GM12878 (cell line): ENCODE measurements at regions of chr6 and their contacts with region 1.

Region 1: GRCh38 chr6:52389626-52390360 is 27.8 kb downstream of the PAQR8 start:
- DNase-seq: peak; percentile 87
- ATAC-seq: peak; percentile 78
- H3K4me3 ChIP-seq: peak overlapping the region; percentile 43; the same call in 1 of the 2 replicates
- H3K27ac ChIP-seq: peak overlapping the region; percentile 94
- H3K4me1 ChIP-seq: peaks cover 63% of the 10 kb centered on the region
- H3K27me3 ChIP-seq: no peaks in the 10 kb centered on the region
- CTCF ChIP-seq: no peak; a peak in 1 of 6 replicates
- EP300 ChIP-seq: peak; percentile 66 to 69; a peak in 2 of 4 replicates
- POLR2A ChIP-seq: no peak
- RAD21 ChIP-seq: peak; percentile 10; the same call in 1 of the 2 replicates

Region 2: GRCh38 chr6:52162940-52163908 is 226.6 kb before region 1 on chr6:
- CTCF ChIA-PET with region 1: interaction called, 3 read pairs
- POLR2A ChIA-PET with region 1: no interaction called
- RAD21 ChIA-PET with region 1: interaction called, 3 read pairs
- SMC1A ChIA-PET with region 1: interaction called, 4 read pairs
- in situ Hi-C with region 1: loop called (anchors 5 kb)
- intact Hi-C with region 1: no loop called
- DNase-seq: no peak
- ATAC-seq: peak; percentile 92
- H3K4me3 ChIP-seq: no peak overlapping the region
- H3K27ac ChIP-seq: no peak overlapping the region
- H3K4me1 ChIP-seq: peaks cover 9% of the 10 kb centered on the region; the same call in 1 of the 2 replicates
- H3K27me3 ChIP-seq: no peaks in the 10 kb centered on the region
- CTCF ChIP-seq: peak; percentile 84 to 95 (median 91)
- EP300 ChIP-seq: no peak
- POLR2A ChIP-seq: no peak
- RAD21 ChIP-seq: peak; percentile 100

Region 3: GRCh38 chr6:52304983-52305390 is 84.8 kb before region 1 on chr6:
- CTCF ChIA-PET with region 1: interaction called, 17 read pairs
- POLR2A ChIA-PET with region 1: interaction called, 11 read pairs
- RAD21 ChIA-PET with region 1: interaction called, 55 read pairs
- SMC1A ChIA-PET with region 1: interaction called, 74 read pairs
- in situ Hi-C with region 1: loop called (anchors 5 kb)
- intact Hi-C with region 1: loop called (anchors 2 kb)
- DNase-seq: no peak
- ATAC-seq: peak; percentile 74
- H3K4me3 ChIP-seq: peak overlapping the region; percentile 25; the same call in 1 of the 2 replicates
- H3K27ac ChIP-seq: peak overlapping the region; percentile 89
- H3K4me1 ChIP-seq: peaks cover 49% of the 10 kb centered on the region
- H3K27me3 ChIP-seq: no peaks in the 10 kb centered on the region
- CTCF ChIP-seq: no peak
- EP300 ChIP-seq: peak in 1 of 2 experiments; percentile 46; a peak in 2 of 4 replicates
- POLR2A ChIP-seq: no peak
- RAD21 ChIP-seq: 0 out of 2 replicates have a peak, but pooled peaks have one; percentile 1

Region 4: GRCh38 chr6:52361945-52362442 is 27.8 kb before region 1 on chr6 and contains the start of gene PAQR8:
- CTCF ChIA-PET with region 1: interaction called, 16 read pairs
- POLR2A ChIA-PET with region 1: interaction called, 74 read pairs
- RAD21 ChIA-PET with region 1: interaction called, 51 read pairs
- SMC1A ChIA-PET with region 1: interaction called, 77 read pairs
- in situ Hi-C with region 1: no loop called
- intact Hi-C with region 1: no loop called
- DNase-seq: no peak
- ATAC-seq: peak; percentile 90
- H3K4me3 ChIP-seq: peak within 1 kb of the TSS; percentile 94
- H3K27ac ChIP-seq: peak within 1 kb of the TSS; percentile 80
- H3K4me1 ChIP-seq: peaks cover 20% of the 10 kb centered on the region
- H3K27me3 ChIP-seq: no peaks in the 10 kb centered on the region
- CTCF ChIP-seq: no peak
- EP300 ChIP-seq: no peak
- POLR2A ChIP-seq: peak; percentile 78
- RAD21 ChIP-seq: no peak
- polyA plus RNA-seq, gene PAQR8: 3.9 to 4.7 TPM

Region 5: GRCh38 chr6:52377538-52378221 is 12.1 kb before region 1 on chr6:
- CTCF ChIA-PET with region 1: interaction called, 34 read pairs
- POLR2A ChIA-PET with region 1: interaction called, 28 read pairs
- RAD21 ChIA-PET with region 1: interaction called, 32 read pairs
- SMC1A ChIA-PET with region 1: interaction called, 70 read pairs
- in situ Hi-C with region 1: no loop called
- intact Hi-C with region 1: no loop called
- DNase-seq: no peak
- ATAC-seq: peak; percentile 67
- H3K4me3 ChIP-seq: peak overlapping the region; percentile 3; the same call in 1 of the 2 replicates
- H3K27ac ChIP-seq: peak overlapping the region; percentile 24; the same call in 1 of the 2 replicates
- H3K4me1 ChIP-seq: peaks cover 26% of the 10 kb centered on the region
- H3K27me3 ChIP-seq: no peaks in the 10 kb centered on the region
- CTCF ChIP-seq: no peak
- EP300 ChIP-seq: no peak
- POLR2A ChIP-seq: no peak
- RAD21 ChIP-seq: no peak

Region 6: GRCh38 chr6:52517502-52518278 is 127.9 kb after region 1 on chr6:
- CTCF ChIA-PET with region 1: no interaction called
- POLR2A ChIA-PET with region 1: no interaction called
- RAD21 ChIA-PET with region 1: no interaction called
- SMC1A ChIA-PET with region 1: no interaction called
- in situ Hi-C with region 1: no loop called
- intact Hi-C with region 1: no loop called
- DNase-seq: no peak
- ATAC-seq: peak; percentile 90
- H3K4me3 ChIP-seq: no peak overlapping the region
- H3K27ac ChIP-seq: peak overlapping the region; percentile 6; the same call in 1 of the 2 replicates
- H3K4me1 ChIP-seq: peaks cover 7% of the 10 kb centered on the region
- H3K27me3 ChIP-seq: no peaks in the 10 kb centered on the region
- CTCF ChIP-seq: no peak
- EP300 ChIP-seq: no peak
- POLR2A ChIP-seq: no peak
- RAD21 ChIP-seq: no peak